ENCODE measurements at regions of chr17 and their contacts with region 1.

Region 1: DNA sequence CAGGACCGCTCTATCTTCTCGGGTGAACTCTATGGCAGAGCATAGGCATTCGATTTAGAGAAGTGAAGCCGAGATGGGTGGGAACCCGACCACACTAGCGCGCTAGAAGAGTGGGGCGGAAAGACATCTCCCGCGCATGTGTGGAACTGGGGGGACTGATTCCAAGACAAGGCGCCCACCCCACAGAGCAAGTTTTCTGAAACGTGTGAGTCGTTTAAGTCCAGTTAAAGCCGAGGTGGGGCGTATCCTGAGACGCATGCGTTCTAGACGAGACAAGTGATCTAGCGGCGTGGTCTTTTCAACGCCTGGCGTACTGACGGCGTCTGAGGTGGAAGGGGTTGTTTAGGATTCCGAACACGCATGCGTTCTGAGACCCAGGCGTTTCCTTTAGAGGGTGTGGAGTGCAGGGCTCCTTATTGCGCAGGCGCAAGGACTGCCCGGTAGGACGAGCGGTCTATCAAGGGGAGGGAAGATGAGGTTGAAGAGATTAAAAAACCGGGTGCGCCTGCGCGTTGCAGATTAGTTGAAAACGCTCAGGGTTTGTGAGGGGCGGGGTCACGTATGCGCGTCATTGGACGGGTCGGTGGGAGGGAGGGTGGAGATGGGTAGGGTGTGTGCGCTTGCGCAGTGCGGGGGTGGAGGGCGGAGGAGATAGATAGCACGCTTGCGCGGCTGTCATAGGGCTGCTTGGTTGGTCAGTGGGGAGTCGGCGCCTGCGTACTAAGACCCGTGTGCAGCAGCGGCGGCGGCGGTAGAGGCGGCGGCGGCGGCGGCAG is at the start of gene EIF5A:
- DNase-seq: peak; percentile 100
- ATAC-seq: peak; percentile 70
- H3K4me3 ChIP-seq: peak within 1 kb of the TSS; percentile 81 to 96 (median 94)
- H3K4me3 Mint-ChIP-seq: peak within 1 kb of the TSS; percentile 95
- H3K27ac ChIP-seq: peak within 1 kb of the TSS; percentile 98 to 99
- H3K27ac Mint-ChIP-seq: peak within 1 kb of the TSS; percentile 99
- H3K4me1 ChIP-seq: peaks cover 17 to 40% of the 10 kb centered on the region in 2 donors
- H3K4me1 Mint-ChIP-seq: peaks cover 39% of the 10 kb centered on the region
- H3K27me3 ChIP-seq: no peaks in the 10 kb centered on the region
- H3K27me3 Mint-ChIP-seq: no peaks in the 10 kb centered on the region
- CTCF ChIP-seq: no peak
- total RNA-seq, gene EIF5A: 233 and 236 TPM in 2 replicates

Region 2: GRCh38 chr17:7204828-7205461 is 102.2 kb before region 1 on chr17:
- CTCF ChIA-PET with region 1: no interaction called
- POLR2A ChIA-PET with region 1: no interaction called
- intact Hi-C with region 1: loop called (anchors 1 kb)
- DNase-seq: peak; percentile 99
- ATAC-seq: peak; percentile 85
- H3K4me3 ChIP-seq: peak overlapping the region in 4 of 5 experiments; percentile 49 to 65 (median 55)
- H3K4me3 Mint-ChIP-seq: peak overlapping the region; percentile 82
- H3K27ac ChIP-seq: peak overlapping the region; percentile 86 to 93
- H3K27ac Mint-ChIP-seq: peak overlapping the region; percentile 91
- H3K4me1 ChIP-seq: peaks cover 17 to 25% of the 10 kb centered on the region in 2 donors
- H3K4me1 Mint-ChIP-seq: peaks cover 28% of the 10 kb centered on the region
- H3K27me3 ChIP-seq: no peaks in the 10 kb centered on the region
- H3K27me3 Mint-ChIP-seq: peaks cover under 1% of the 10 kb centered on the region
- CTCF ChIP-seq: no peak

Region 3: DNA sequence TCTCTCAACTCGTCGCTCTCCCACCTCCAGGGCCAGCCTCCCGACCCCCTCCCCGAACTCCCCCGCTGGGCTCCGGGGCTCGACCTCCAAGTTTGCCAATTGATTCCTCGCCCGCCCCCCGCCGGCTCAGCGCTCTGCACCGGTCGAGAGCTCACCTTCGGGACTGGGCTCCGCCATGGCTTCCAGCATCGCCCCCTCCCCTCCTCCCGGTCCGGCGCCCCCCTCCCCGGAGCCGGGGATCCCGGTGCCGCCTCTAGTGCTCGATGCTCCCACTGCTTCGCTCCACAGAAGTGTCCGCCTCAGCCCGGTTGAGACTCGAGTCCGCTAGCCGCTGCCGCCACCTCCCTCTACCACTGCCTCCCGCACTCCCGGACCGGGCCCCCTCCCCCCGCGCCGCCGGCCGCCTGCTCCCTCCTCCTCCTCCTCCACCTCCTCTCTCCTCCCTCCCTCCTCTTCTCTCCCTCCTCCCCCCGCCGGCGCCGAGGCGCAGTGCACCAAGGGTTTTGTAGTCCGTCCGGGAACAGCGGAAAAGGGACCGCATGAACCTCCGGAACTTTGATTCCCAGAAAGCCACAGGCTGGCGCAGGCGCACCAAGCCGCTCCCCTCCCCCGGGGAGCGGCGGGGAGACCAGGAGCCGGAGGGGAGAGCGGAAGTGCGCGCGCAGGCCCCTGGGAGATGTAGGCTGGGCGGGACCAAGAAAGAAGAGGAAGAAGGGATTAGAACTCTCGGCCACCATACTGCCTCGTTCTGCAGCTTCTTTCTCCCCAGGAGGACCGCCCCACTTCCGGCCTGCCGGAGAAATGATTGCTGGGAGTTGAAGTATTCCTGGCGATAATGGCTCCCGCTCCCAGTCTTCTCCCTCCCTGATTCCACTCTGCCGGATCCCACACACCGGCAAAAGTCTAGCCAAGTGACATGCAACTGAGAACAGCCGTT is 67.7 kb before region 1 on chr17 and contains the start of gene PHF23:
- CTCF ChIA-PET with region 1: interaction called, 3 read pairs
- POLR2A ChIA-PET with region 1: interaction called, 5 read pairs
- intact Hi-C with region 1: loop called (anchors 1 kb)
- DNase-seq: peak; percentile 98
- ATAC-seq: peak; percentile 64
- H3K4me3 ChIP-seq: peak within 1 kb of the TSS; percentile 74 to 97 (median 75)
- H3K4me3 Mint-ChIP-seq: peak within 1 kb of the TSS; percentile 98
- H3K27ac ChIP-seq: peak within 1 kb of the TSS; percentile 55 to 97
- H3K27ac Mint-ChIP-seq: peak within 1 kb of the TSS; percentile 100
- H3K4me1 ChIP-seq: peaks cover 42 to 49% of the 10 kb centered on the region in 2 donors
- H3K4me1 Mint-ChIP-seq: peaks cover 61% of the 10 kb centered on the region
- H3K27me3 ChIP-seq: no peaks in the 10 kb centered on the region
- H3K27me3 Mint-ChIP-seq: no peaks in the 10 kb centered on the region
- CTCF ChIP-seq: no peak
- total RNA-seq, gene PHF23: 42.3 and 45.8 TPM in 2 replicates

Region 4: GRCh38 chr17:7296189-7296902 is 10.8 kb before region 1 on chr17:
- CTCF ChIA-PET with region 1: interaction called, 20 read pairs
- POLR2A ChIA-PET with region 1: interaction called, 7 read pairs
- intact Hi-C with region 1: no loop called
- DNase-seq: peak; percentile 84
- ATAC-seq: peak; percentile 58
- H3K4me3 ChIP-seq: peak overlapping the region in 2 of 5 experiments; percentile 12 to 14
- H3K4me3 Mint-ChIP-seq: peak overlapping the region; percentile 83
- H3K27ac ChIP-seq: no peak overlapping the region
- H3K27ac Mint-ChIP-seq: peak overlapping the region; percentile 47
- H3K4me1 ChIP-seq: peaks cover 28 to 30% of the 10 kb centered on the region in 2 donors
- H3K4me1 Mint-ChIP-seq: peaks cover 22% of the 10 kb centered on the region
- H3K27me3 ChIP-seq: peaks cover 0 to 52% (median 14%) of the 10 kb centered on the region in 4 experiments
- H3K27me3 Mint-ChIP-seq: peaks cover 36% of the 10 kb centered on the region
- CTCF ChIP-seq: peak; percentile 93

Region 5: DNA sequence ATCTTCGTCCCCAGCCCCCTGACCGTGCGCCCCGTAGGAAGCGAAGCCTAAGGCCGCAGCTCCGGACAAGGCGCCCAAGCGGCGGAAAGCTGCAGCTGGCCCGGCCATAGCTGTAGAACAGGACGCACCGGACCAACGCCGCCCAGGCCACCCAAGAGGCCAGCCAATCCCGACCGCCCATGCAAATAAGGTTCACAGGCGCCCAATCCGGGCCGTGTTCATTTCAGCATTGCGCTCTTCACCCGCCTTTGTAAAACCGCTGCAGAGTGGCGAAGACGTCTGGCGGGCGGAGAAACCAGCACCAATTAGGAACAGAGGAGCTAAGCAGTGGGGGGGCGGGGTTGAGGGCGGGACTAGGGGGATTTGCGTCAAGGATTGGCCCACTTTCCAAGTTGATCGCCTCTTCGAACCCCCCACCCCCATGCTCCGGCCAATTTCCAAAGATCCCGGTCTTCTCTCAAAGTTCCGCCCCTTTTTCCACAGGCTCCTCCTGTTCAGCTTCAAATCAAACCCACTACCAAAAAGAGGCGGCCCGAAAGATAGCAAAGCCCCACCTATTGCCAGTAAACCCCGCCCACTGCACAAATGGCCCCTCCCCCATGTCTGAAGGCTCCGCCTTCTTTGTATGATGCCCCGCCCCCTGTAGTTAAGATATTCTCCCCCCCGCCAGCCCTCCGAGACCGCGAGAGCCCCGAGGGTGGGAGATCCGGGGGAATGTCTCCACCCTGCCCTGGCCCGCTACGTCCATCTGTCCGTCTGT is 97.1 kb after region 1 on chr17 and contains the start of gene TMEM256:
- CTCF ChIA-PET with region 1: no interaction called
- POLR2A ChIA-PET with region 1: interaction called, 7 read pairs
- intact Hi-C with region 1: loop called (anchors 2 kb)
- DNase-seq: peak; percentile 98
- ATAC-seq: peak; percentile 87
- H3K4me3 ChIP-seq: peak within 1 kb of the TSS; percentile 57 to 95 (median 82)
- H3K4me3 Mint-ChIP-seq: peak within 1 kb of the TSS; percentile 98
- H3K27ac ChIP-seq: peak within 1 kb of the TSS; percentile 45 to 59
- H3K27ac Mint-ChIP-seq: peak within 1 kb of the TSS; percentile 94
- H3K4me1 ChIP-seq: peaks cover 17 to 20% of the 10 kb centered on the region in 2 donors
- H3K4me1 Mint-ChIP-seq: peaks cover 22% of the 10 kb centered on the region
- H3K27me3 ChIP-seq: peaks cover 0 to 27% (median 4%) of the 10 kb centered on the region in 4 experiments
- H3K27me3 Mint-ChIP-seq: peaks cover 17% of the 10 kb centered on the region
- CTCF ChIP-seq: no peak
- total RNA-seq, gene TMEM256: 64.5 and 67.8 TPM in 2 replicates

Region 6: DNA sequence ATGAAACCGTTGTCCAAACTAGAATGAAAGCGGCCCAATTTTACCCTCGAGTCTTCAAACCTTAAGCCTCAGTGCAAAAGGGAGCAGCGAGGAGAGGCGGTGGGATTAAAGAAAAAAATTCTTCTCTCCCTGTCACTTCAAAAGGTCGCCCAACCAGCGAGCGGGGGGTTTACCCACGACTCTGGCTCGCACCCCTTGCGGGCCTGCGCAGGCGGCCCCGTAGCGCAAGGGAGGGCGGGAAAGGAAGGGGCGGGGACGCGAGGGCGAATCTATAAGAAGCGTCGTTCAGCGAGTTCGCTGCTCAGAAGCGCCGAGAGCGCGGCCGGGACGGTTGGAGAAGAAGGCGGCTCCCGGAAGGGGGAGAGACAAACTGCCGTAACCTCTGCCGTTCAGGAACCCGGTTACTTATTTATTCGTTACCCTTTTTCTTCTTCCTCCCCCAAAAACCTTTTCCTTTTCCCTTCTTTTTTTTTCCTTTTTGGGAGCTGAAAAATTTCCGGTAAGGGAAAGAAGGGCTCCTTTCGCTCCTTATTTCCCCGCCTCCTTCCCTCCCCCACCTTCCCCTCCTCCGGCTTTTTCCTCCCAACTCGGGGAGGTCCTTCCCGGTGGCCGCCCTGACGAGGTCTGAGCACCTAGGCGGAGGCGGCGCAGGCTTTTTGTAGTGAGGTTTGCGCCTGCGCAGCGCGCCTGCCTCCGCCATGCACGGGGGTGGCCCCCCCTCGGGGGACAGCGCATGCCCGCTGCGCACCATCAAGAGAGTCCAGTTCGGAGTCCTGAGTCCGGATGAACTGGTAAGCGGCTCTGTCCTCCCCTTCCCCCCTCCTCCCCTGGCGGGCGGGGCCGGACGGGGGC is 177.2 kb after region 1 on chr17 and contains the start of gene POLR2A:
- CTCF ChIA-PET with region 1: no interaction called
- POLR2A ChIA-PET with region 1: no interaction called
- intact Hi-C with region 1: loop called (anchors 1 kb)
- DNase-seq: peak; percentile 99
- ATAC-seq: peak; percentile 63
- H3K4me3 ChIP-seq: peak within 1 kb of the TSS; percentile 80 to 100 (median 97)
- H3K4me3 Mint-ChIP-seq: peak within 1 kb of the TSS; percentile 99
- H3K27ac ChIP-seq: peak within 1 kb of the TSS; percentile 100
- H3K27ac Mint-ChIP-seq: peak within 1 kb of the TSS; percentile 100
- H3K4me1 ChIP-seq: peaks cover 29 to 53% of the 10 kb centered on the region in 2 donors
- H3K4me1 Mint-ChIP-seq: peaks cover 71% of the 10 kb centered on the region
- H3K27me3 ChIP-seq: no peaks in the 10 kb centered on the region
- H3K27me3 Mint-ChIP-seq: no peaks in the 10 kb centered on the region
- CTCF ChIP-seq: no peak
- total RNA-seq, gene POLR2A: 225 and 240 TPM in 2 replicates

Measured in B cell (primary cell).